ENCODE measurements at regions of chr10 and their contacts with region 1.

Region 1: GRCh38 chr10:63217120-63217605 is 84.0 kb downstream of the NRBF2 start:
- DNase-seq: peak; percentile 20 to 69
- H3K4me3 ChIP-seq: no peak overlapping the region
- H3K4me1 ChIP-seq: peaks cover 8% of the 10 kb centered on the region; the same call in 1 of the 2 replicates
- H3K27me3 ChIP-seq: no peaks in the 10 kb centered on the region

Region 2: GRCh38 chr10:63465293-63466143 is 248.4 kb after region 1 on chr10 and contains the start of gene JMJD1C:
- in situ Hi-C with region 1: no loop called
- DNase-seq: peak; percentile 66 to 83
- H3K4me3 ChIP-seq: peak within 1 kb of the TSS; percentile 80
- H3K4me1 ChIP-seq: peaks cover 16% of the 10 kb centered on the region
- H3K27me3 ChIP-seq: no peaks in the 10 kb centered on the region

Region 3: DNA sequence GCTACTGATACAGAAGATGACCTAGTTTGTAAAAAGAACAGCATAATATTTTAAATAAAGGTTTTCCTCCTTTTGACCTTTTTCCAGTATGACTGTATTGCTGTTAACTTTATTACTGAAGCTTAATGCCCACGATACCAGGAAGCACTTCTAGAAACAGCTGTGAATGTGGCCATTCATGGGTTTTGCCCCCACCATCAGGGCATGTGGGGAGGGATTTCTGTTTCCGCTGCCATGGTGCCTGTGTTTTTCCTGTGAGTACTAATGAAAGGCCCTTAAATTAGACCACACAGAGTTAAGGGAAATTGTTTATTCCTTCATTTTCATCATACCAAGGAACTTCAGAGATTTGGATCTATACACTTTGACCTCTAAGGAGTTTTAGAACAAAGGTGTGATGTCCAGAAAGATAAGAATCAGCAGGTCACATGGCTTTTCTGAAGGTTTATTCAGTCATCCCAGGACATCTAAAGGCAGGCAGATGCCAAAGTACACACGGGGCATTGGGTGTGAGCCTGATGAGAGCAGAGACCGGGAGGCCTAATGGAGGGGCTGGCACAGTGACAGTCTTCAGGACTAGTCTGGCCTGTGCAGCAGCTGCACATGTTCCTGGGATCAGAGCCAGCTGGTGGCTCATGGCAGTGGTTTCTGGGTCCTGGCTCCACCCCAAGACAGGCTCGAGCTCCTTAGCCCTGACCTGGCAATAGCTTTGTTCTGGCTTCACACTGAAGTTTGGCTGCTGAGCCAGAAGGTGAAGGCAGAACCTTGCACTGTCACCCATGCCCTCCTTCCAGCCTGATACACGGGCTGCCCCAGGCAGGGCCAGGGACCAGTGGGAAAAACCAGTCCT is 494.9 kb after region 1 on chr10:
- in situ Hi-C with region 1: loop called (anchors 10 kb)
- DNase-seq: peak in 1 of 2 experiments; percentile 31
- H3K4me3 ChIP-seq: no peak overlapping the region
- H3K4me1 ChIP-seq: peaks cover 16% of the 10 kb centered on the region
- H3K27me3 ChIP-seq: peaks cover 10% of the 10 kb centered on the region; the same call in 1 of the 2 replicates